ENCODE measurements at regions of chr15 and their contacts with region 1.

Region 1: GRCh38 chr15:71823801-71824200 is 13.4 kb downstream of the NR2E3 start:
- DNase-seq: no peak
- H3K4me3 ChIP-seq: no peak overlapping the region
- H3K27ac ChIP-seq: no peak overlapping the region
- H3K4me1 ChIP-seq: no peaks in the 10 kb centered on the region
- H3K27me3 ChIP-seq: no peaks in the 10 kb centered on the region
- CTCF ChIP-seq: no peak

Region 2: GRCh38 chr15:71526060-71526820 is 297.6 kb before region 1 on chr15:
- CTCF ChIA-PET with region 1: no interaction called
- dilution Hi-C with region 1: loop called (anchors 5 kb)
- in situ Hi-C with region 1: no loop called
- intact Hi-C with region 1: no loop called
- DNase-seq: no peak
- H3K4me3 ChIP-seq: no peak overlapping the region
- H3K27ac ChIP-seq: no peak overlapping the region
- H3K4me1 ChIP-seq: no peaks in the 10 kb centered on the region
- H3K27me3 ChIP-seq: no peaks in the 10 kb centered on the region
- CTCF ChIP-seq: no peak

Region 3: GRCh38 chr15:71752604-71753289 is 71.1 kb before region 1 on chr15:
- CTCF ChIA-PET with region 1: no interaction called
- dilution Hi-C with region 1: loop called (anchors 5 kb)
- in situ Hi-C with region 1: no loop called
- intact Hi-C with region 1: no loop called
- DNase-seq: peak; percentile 53
- H3K4me3 ChIP-seq: no peak overlapping the region
- H3K27ac ChIP-seq: no peak overlapping the region
- H3K4me1 ChIP-seq: peaks cover 29% of the 10 kb centered on the region
- H3K27me3 ChIP-seq: no peaks in the 10 kb centered on the region
- CTCF ChIP-seq: peak; percentile 41 to 42

Region 4: GRCh38 chr15:71792521-71792920 is 31.3 kb before region 1 on chr15:
- CTCF ChIA-PET with region 1: no interaction called
- dilution Hi-C with region 1: no loop called
- in situ Hi-C with region 1: no loop called
- intact Hi-C with region 1: no loop called
- DNase-seq: peak; percentile 84
- H3K4me3 ChIP-seq: no peak overlapping the region
- H3K27ac ChIP-seq: peak overlapping the region; percentile 38
- H3K4me1 ChIP-seq: peaks cover 30% of the 10 kb centered on the region
- H3K27me3 ChIP-seq: no peaks in the 10 kb centered on the region
- CTCF ChIP-seq: no peak

Region 5: DNA sequence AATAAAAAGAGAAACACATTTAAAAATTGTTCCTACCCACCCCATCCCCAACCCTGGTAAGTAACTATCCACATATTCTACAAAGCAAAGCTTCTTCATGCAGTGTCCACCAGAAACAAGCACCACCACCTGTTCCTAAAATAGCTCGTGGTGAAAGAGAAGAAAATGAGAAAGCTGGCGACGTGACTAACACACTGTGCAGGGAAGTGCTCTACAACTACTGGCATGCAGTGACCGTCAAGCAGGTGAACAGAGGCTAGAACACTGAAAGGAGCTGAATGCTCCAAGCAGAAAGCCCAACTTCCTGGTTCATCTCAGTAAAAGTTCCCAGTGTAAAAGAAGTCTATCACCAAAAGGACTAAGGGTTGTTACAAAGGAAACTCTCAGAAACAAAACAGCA is 67.2 kb after region 1 on chr15:
- CTCF ChIA-PET with region 1: no interaction called
- dilution Hi-C with region 1: loop called (anchors 5 kb)
- in situ Hi-C with region 1: no loop called
- intact Hi-C with region 1: no loop called
- DNase-seq: no peak
- H3K4me3 ChIP-seq: no peak overlapping the region
- H3K27ac ChIP-seq: no peak overlapping the region
- H3K4me1 ChIP-seq: no peaks in the 10 kb centered on the region
- H3K27me3 ChIP-seq: no peaks in the 10 kb centered on the region
- CTCF ChIP-seq: no peak

Region 6: DNA sequence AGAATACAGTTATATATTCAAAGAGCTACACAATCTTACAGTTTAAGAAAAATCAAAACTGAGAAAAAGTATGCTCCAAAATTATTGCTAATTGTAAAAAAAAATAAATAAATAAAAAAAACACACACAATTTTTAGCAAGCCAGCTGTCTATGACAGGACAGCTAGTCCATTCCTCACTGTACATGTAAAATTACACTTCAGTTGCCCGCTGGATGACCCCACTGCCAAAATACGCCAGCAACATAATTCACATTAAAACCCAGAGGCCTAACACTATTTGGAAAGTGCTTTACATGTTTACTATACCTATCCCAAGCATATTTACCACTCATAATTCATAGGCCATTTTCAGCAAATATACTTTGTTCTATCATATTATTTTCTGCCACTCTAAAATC is 288.3 kb after region 1 on chr15:
- CTCF ChIA-PET with region 1: no interaction called
- dilution Hi-C with region 1: no loop called
- in situ Hi-C with region 1: no loop called
- intact Hi-C with region 1: no loop called
- DNase-seq: no peak
- H3K4me3 ChIP-seq: no peak overlapping the region
- H3K27ac ChIP-seq: no peak overlapping the region
- H3K4me1 ChIP-seq: no peaks in the 10 kb centered on the region
- H3K27me3 ChIP-seq: no peaks in the 10 kb centered on the region
- CTCF ChIP-seq: no peak